ENCODE measurements at regions of chr6 and their contacts with region 1.

Region 1: DNA sequence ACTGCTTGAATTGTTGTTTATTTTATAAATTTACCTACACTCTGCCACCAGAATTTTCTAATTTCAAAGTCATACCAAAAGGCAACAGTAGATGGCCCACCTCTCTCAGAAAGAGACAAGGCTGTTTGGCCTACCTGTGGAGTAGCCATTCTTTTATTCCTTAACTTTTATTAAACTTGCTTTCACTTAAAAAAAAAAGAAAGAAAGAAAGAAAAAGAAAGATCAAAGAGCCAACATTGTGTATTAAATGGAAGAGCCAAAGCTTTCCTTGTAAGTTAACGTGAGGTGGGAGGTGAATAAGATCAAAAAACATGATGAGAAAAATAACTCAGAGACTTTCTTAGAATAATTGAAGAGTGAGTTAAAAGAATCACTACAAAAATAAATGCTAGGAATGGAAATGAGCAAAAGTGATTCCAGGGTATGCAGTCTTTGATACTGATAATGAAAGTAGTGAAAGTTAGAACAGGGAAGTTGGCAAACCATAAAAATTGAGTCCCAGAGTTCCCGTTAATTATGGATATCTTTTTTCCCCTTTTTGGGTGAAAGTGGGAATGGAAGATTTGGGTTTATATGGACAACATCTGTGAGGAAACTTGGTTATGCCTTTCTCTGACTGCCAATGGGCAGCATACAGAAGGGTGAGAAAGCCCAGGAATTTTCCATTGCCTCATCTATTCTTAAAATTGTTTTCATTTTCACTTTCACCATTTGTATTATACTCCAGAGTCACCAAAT is 35.9 kb upstream of the MYB start:
- DNase-seq: peak in 6 of 9 donors; percentile 14 to 51 (median 48)
- ATAC-seq: peak; percentile 74
- H3K4me3 ChIP-seq: peak overlapping the region; percentile 23
- H3K4me3 Mint-ChIP-seq: peak overlapping the region in 9 of 10 donors; percentile 39 to 81 (median 61)
- H3K27ac ChIP-seq: peak overlapping the region; percentile 41
- H3K27ac Mint-ChIP-seq: peak overlapping the region; percentile 54 to 91 (median 86)
- H3K4me1 ChIP-seq: peaks cover 0 to 35% of the 10 kb centered on the region in 2 donors
- H3K4me1 Mint-ChIP-seq: peaks cover 28 to 76% (median 56%) of the 10 kb centered on the region in 7 donors
- H3K27me3 ChIP-seq: no peaks in the 10 kb centered on the region
- H3K27me3 Mint-ChIP-seq: no peaks in the 10 kb centered on the region

Region 2: GRCh38 chr6:135002229-135002844 is 142.9 kb before region 1 on chr6:
- CTCF ChIA-PET with region 1: interaction called, 3 read pairs
- POLR2A ChIA-PET with region 1: no interaction called
- intact Hi-C with region 1: loop called in 1 of 2 experiments (anchors 1 kb)
- DNase-seq: peak in 4 of 9 donors; percentile 18 to 28 (median 24)
- ATAC-seq: peak; percentile 54
- H3K4me3 ChIP-seq: no peak overlapping the region
- H3K4me3 Mint-ChIP-seq: no peak overlapping the region
- H3K27ac ChIP-seq: no peak overlapping the region
- H3K27ac Mint-ChIP-seq: no peak overlapping the region
- H3K4me1 ChIP-seq: peaks cover 0 to 8% of the 10 kb centered on the region in 2 donors
- H3K4me1 Mint-ChIP-seq: peaks cover under 1 to 19% (median 15%) of the 10 kb centered on the region in 7 donors
- H3K27me3 ChIP-seq: no peaks in the 10 kb centered on the region
- H3K27me3 Mint-ChIP-seq: no peaks in the 10 kb centered on the region

Region 3: GRCh38 chr6:135037541-135037940 is 107.7 kb before region 1 on chr6:
- CTCF ChIA-PET with region 1: no interaction called
- POLR2A ChIA-PET with region 1: no interaction called
- intact Hi-C with region 1: no loop called
- DNase-seq: no peak
- ATAC-seq: no peak
- H3K4me3 ChIP-seq: no peak overlapping the region
- H3K4me3 Mint-ChIP-seq: no peak overlapping the region
- H3K27ac ChIP-seq: peak overlapping the region; percentile 42
- H3K27ac Mint-ChIP-seq: peak overlapping the region in 8 of 9 donors; percentile 6 to 90 (median 74)
- H3K4me1 ChIP-seq: peaks cover 0 to 3% of the 10 kb centered on the region in 2 donors
- H3K4me1 Mint-ChIP-seq: peaks cover 15 to 70% (median 60%) of the 10 kb centered on the region in 7 donors
- H3K27me3 ChIP-seq: no peaks in the 10 kb centered on the region
- H3K27me3 Mint-ChIP-seq: no peaks in the 10 kb centered on the region

Region 4: GRCh38 chr6:135094403-135094848 is 50.8 kb before region 1 on chr6:
- CTCF ChIA-PET with region 1: interaction called, 8 read pairs
- POLR2A ChIA-PET with region 1: interaction called, 7 read pairs
- intact Hi-C with region 1: loop called (anchors 1 kb)
- DNase-seq: peak in 6 of 9 donors; percentile 57 to 75 (median 64)
- ATAC-seq: peak; percentile 88
- H3K4me3 ChIP-seq: no peak overlapping the region
- H3K4me3 Mint-ChIP-seq: peak overlapping the region; percentile 3 to 70 (median 54)
- H3K27ac ChIP-seq: peak overlapping the region; percentile 56
- H3K27ac Mint-ChIP-seq: peak overlapping the region; percentile 80 to 98 (median 90)
- H3K4me1 ChIP-seq: peaks cover 17 to 41% of the 10 kb centered on the region in 2 donors
- H3K4me1 Mint-ChIP-seq: peaks cover 19 to 95% (median 79%) of the 10 kb centered on the region in 7 donors
- H3K27me3 ChIP-seq: no peaks in the 10 kb centered on the region
- H3K27me3 Mint-ChIP-seq: no peaks in the 10 kb centered on the region

Region 5: DNA sequence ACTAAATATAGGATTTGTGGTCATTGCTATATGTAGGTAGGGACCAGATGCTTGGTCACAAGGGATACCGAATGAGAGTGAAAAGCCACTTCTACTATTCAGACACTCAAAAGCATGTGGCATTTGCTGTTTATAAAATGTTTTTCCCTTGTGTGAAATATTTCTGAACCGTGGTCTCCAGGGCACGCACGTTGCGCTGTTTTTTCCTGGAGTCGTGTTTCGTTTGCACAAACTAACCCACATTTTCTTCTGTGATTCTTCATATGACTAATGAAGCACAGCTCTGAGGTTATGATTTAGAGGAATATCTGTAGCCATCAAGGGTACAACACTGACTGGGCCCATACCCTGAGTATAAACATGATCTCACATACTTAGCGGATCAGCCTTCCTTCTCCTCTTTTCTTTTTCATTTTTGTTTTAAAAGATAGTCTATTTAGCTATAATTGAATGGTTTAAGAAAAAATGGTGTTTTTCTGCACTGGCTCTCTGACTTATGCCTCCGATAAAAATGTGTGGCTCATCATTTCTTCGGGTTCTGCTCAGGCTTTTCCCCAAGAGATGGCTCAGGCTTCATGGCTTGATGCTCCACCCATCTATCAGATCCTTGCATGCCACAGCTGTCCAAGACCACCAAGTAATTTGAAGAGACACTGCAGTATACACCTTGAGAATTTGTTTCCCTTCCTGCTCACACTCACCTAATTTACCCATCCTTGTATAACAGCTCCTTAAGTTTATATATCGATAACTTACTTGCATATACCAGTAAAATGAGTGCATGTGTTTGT is 30.7 kb before region 1 on chr6:
- CTCF ChIA-PET with region 1: interaction called, 5 read pairs
- POLR2A ChIA-PET with region 1: interaction called, 3 read pairs
- intact Hi-C with region 1: loop called (anchors 2 kb)
- DNase-seq: no peak
- ATAC-seq: no peak
- H3K4me3 ChIP-seq: no peak overlapping the region
- H3K4me3 Mint-ChIP-seq: peak overlapping the region in 8 of 10 donors; percentile 7 to 83 (median 36)
- H3K27ac ChIP-seq: no peak overlapping the region
- H3K27ac Mint-ChIP-seq: peak overlapping the region in 7 of 9 donors; percentile 6 to 92 (median 49)
- H3K4me1 ChIP-seq: peaks cover 19 to 42% of the 10 kb centered on the region in 2 donors
- H3K4me1 Mint-ChIP-seq: peaks cover 26 to 88% (median 76%) of the 10 kb centered on the region in 7 donors
- H3K27me3 ChIP-seq: no peaks in the 10 kb centered on the region
- H3K27me3 Mint-ChIP-seq: peaks cover 0 to 7% (median 0%) of the 10 kb centered on the region in 5 donors

Region 6: GRCh38 chr6:135162678-135163439 is 17.6 kb after region 1 on chr6:
- CTCF ChIA-PET with region 1: interaction called, 9 read pairs
- POLR2A ChIA-PET with region 1: interaction called, 3 read pairs
- intact Hi-C with region 1: loop called (anchors 1 to 2 kb)
- DNase-seq: peak in 2 of 9 donors; percentile 10 to 11
- ATAC-seq: no peak
- H3K4me3 ChIP-seq: no peak overlapping the region
- H3K4me3 Mint-ChIP-seq: peak overlapping the region in 6 of 10 donors; percentile 43 to 63 (median 59)
- H3K27ac ChIP-seq: peak overlapping the region; percentile 6
- H3K27ac Mint-ChIP-seq: peak overlapping the region in 8 of 9 donors; percentile 1 to 89 (median 47)
- H3K4me1 ChIP-seq: peaks cover 5 to 22% of the 10 kb centered on the region in 2 donors
- H3K4me1 Mint-ChIP-seq: peaks cover 11 to 57% (median 37%) of the 10 kb centered on the region in 7 donors
- H3K27me3 ChIP-seq: no peaks in the 10 kb centered on the region
- H3K27me3 Mint-ChIP-seq: no peaks in the 10 kb centered on the region

Region 7: DNA sequence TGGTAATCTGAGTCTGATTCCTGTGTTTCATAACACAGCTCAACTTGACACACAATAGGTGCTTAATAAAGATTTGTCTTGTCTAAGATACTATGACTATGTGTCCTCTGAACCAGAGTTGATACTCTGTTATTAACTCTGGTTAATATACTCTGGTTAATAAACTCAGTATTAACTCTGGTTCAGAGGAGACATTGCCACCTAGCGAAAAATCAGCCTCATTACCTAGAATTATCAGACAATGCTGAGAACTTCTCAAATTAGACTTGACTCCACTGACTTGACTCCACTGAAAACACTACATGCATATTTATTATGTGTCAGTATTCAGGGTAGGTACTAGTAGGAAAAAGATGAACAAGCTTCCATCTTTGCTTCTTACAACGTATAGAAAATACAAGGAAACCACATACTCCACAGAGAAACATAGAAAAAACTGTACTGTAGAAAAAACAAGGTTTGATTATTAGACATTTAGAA is 278.5 kb after region 1 on chr6:
- CTCF ChIA-PET with region 1: interaction called, 4 read pairs
- POLR2A ChIA-PET with region 1: no interaction called
- intact Hi-C with region 1: loop called (anchors 1 kb)
- DNase-seq: peak in 5 of 9 donors; percentile 4 to 31 (median 18)
- ATAC-seq: peak; percentile 67
- H3K4me3 ChIP-seq: no peak overlapping the region
- H3K4me3 Mint-ChIP-seq: no peak overlapping the region
- H3K27ac ChIP-seq: no peak overlapping the region
- H3K27ac Mint-ChIP-seq: peak overlapping the region in 1 of 9 donors; percentile 1
- H3K4me1 ChIP-seq: no peaks in the 10 kb centered on the region
- H3K4me1 Mint-ChIP-seq: peaks cover 0 to 14% (median 4%) of the 10 kb centered on the region in 7 donors
- H3K27me3 ChIP-seq: no peaks in the 10 kb centered on the region
- H3K27me3 Mint-ChIP-seq: no peaks in the 10 kb centered on the region